Endothelial cell of umbilical vein (primary cell): ENCODE measurements at regions of chr2 and their contacts with region 1.

Region 1: GRCh38 chr2:50529600-50530218 is 502.2 kb downstream of the NRXN1 start:
- DNase-seq: peak; percentile 53
- H3K4me3 ChIP-seq: no peak overlapping the region
- H3K27ac ChIP-seq: no peak overlapping the region
- H3K4me1 ChIP-seq: no peaks in the 10 kb centered on the region
- H3K27me3 ChIP-seq: no peaks in the 10 kb centered on the region
- CTCF ChIP-seq: peak; percentile 51 to 59
- POLR2A ChIP-seq: no peak

Region 2: DNA sequence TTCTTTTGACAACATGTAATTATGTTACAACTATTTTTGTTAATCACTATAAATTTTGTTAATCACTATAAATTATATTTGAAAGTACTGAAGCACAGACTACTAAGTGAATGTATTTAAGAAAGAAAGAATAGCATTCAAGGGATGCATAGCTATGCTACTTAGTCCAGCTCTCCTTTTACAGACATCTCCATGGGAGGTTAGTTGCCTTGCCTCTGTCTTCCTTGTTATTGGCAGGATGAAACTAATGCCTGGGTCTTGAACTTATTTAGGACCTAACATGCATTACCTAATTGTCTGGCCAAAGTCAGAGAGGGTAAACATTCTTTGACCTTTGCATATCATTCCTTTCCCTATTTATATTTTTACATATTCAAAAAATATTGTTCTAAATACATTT is 17.3 kb before region 1 on chr2:
- CTCF ChIA-PET with region 1: no interaction called
- POLR2A ChIA-PET with region 1: no interaction called
- dilution Hi-C with region 1: no loop called
- intact Hi-C with region 1: no loop called
- DNase-seq: no peak
- H3K4me3 ChIP-seq: no peak overlapping the region
- H3K27ac ChIP-seq: no peak overlapping the region
- H3K4me1 ChIP-seq: no peaks in the 10 kb centered on the region
- H3K27me3 ChIP-seq: no peaks in the 10 kb centered on the region
- CTCF ChIP-seq: no peak
- POLR2A ChIP-seq: no peak

Region 3: GRCh38 chr2:51424418-51424817 is 894.7 kb after region 1 on chr2:
- CTCF ChIA-PET with region 1: no interaction called
- POLR2A ChIA-PET with region 1: no interaction called
- dilution Hi-C with region 1: no loop called
- intact Hi-C with region 1: loop called (anchors 5 kb)
- DNase-seq: peak; percentile 28
- H3K4me3 ChIP-seq: no peak overlapping the region
- H3K27ac ChIP-seq: no peak overlapping the region
- H3K4me1 ChIP-seq: no peaks in the 10 kb centered on the region
- H3K27me3 ChIP-seq: no peaks in the 10 kb centered on the region
- CTCF ChIP-seq: peak in 1 of 2 donors; percentile 47
- POLR2A ChIP-seq: no peak

Region 4: DNA sequence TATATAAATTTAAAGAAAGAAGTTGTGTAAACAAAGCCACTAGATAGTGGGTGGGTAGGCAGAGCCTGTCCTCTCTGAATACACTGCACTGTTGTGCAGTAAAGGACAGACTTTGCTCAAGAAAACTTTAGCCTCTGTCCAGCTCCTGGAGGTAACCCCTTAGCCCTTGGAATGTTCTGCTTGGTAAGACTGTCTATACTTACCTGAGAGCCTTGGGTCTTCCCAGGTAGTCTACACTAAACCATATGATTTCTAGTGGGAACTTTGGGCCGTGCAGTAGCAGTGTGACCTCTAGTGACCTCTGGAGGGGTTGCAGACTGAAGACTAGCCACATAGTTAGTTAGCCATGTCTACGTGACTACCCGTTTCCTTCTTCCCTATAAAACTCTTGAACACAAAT is 1180.5 kb after region 1 on chr2:
- CTCF ChIA-PET with region 1: no interaction called
- POLR2A ChIA-PET with region 1: no interaction called
- dilution Hi-C with region 1: no loop called
- intact Hi-C with region 1: loop called (anchors 1 kb)
- DNase-seq: no peak
- H3K4me3 ChIP-seq: no peak overlapping the region
- H3K27ac ChIP-seq: no peak overlapping the region
- H3K4me1 ChIP-seq: no peaks in the 10 kb centered on the region
- H3K27me3 ChIP-seq: no peaks in the 10 kb centered on the region
- CTCF ChIP-seq: peak in 1 of 2 donors; percentile 19
- POLR2A ChIP-seq: no peak

Region 5: DNA sequence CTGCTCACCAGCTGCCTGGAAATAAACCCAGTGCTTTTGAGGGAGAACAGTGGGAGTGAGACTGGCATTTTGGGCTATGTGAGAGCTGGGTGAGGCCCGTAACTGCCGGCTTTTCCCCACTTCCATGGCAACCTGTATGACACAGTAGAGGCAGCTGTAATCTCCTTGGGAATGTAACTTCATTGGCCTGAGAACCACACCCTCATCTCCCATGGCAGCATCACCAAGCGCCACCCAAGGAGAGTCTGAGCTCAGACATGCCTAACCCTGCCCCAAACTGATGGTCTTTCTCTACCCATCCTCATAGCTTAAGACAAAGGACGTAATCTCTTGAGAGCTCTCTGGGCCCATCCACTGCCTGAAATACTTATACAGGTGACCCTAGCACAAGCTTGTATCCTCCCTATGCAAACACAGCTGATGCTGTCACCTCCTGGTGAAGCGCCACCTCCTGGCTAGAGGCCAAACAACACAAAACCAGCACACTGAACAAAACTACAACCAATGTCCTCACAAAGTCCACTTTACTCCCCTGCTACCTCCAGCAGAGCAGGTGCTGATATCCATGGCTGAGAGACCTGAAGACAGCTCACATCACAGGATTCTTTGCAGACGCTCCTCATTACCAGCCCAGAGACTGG is 1265.7 kb after region 1 on chr2:
- CTCF ChIA-PET with region 1: interaction called, 10 read pairs
- POLR2A ChIA-PET with region 1: no interaction called
- dilution Hi-C with region 1: no loop called
- intact Hi-C with region 1: no loop called
- DNase-seq: peak; percentile 14
- H3K4me3 ChIP-seq: no peak overlapping the region
- H3K27ac ChIP-seq: no peak overlapping the region
- H3K4me1 ChIP-seq: no peaks in the 10 kb centered on the region
- H3K27me3 ChIP-seq: no peaks in the 10 kb centered on the region
- CTCF ChIP-seq: peak; percentile 38 to 53
- POLR2A ChIP-seq: no peak